ENCODE measurements at regions of chr21 and their contacts with region 1.

Region 1: DNA sequence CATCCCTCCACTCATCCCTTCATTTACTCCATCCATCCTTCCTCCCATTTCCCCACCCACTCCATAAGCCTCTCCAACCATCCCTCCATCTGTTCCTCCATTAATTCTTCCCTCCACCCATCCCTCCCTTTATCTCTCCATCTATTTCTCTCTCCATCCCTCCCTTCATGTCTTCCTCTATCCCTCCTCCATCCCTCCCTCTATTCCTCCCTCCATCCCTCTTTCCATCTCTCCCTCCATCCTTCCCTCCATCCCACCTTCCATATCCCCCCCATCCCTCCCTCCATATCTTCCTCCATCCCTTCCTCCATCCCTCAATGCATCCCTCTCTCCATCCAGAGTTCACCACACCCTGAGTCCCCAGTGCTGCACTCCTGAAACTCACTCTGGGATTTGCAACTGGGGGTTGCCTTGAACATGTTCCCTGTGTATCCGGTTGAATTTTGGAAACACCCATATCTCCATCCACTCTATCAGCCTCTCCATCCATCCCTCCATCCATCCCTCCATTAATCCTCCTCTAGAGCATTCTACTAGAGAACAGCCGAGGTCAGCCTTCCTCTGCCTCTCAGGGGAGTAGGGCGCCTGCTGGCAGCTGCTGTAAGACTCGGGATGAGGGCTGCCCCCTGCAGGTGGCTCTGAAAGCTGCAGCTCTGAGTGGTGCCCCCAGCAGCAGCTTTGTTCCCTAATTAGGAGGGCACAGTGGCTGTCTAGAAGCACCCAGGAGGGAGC is 39.4 kb downstream of the ABCG1 start:
- DNase-seq: peak; percentile 75 to 85 (median 78)
- H3K4me3 ChIP-seq: no peak overlapping the region
- H3K27ac ChIP-seq: no peak overlapping the region
- H3K4me1 ChIP-seq: peaks cover 9 to 68% (median 55%) of the 10 kb centered on the region in 4 experiments
- H3K27me3 ChIP-seq: no peaks in the 10 kb centered on the region

Region 2: DNA sequence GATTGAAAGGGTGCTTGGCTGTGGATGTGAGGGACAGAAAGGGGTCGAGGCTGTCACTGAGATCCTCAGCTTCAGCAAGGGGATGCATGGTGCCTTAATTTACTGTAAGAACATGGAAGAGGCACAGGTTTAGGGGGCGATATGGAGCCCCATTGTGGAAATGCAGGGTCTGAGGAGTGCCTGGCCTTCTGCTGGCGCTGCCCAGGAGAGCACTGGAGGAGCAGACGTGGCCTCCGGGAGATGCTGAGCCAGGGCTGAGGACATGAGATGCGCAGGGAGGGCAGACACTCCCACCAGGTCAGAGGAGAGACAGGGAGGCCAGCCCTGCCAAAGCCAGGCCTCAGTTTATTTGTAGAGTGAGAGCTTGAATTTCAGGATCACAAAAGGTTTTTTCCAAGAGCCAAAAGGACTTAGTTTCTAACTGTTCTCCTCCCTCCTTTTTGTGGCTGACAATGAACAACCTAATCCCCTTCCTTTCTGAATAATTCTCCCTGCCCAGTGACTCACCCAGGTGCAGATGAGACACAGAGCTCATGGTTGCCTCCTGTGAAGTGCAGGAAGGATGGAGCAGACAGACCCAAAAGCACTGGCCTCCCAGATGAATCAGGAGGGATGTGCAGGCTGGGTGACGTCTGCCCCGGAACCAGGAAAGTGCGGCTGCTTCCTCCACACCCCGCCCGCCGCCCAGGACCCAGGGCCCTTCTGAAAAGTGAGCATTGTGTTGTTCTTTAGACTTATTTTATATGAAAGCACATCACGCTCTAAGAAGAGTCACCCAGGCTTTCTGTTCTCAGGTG is 677.4 kb before region 1 on chr21:
- CTCF ChIA-PET with region 1: no interaction called
- POLR2A ChIA-PET with region 1: no interaction called
- DNase-seq: no peak
- H3K4me3 ChIP-seq: no peak overlapping the region
- H3K27ac ChIP-seq: no peak overlapping the region
- H3K4me1 ChIP-seq: no peaks in the 10 kb centered on the region
- H3K27me3 ChIP-seq: no peaks in the 10 kb centered on the region

Region 3: GRCh38 chr21:42156690-42157577 is 101.4 kb before region 1 on chr21:
- CTCF ChIA-PET with region 1: interaction called, 11 read pairs
- POLR2A ChIA-PET with region 1: interaction called, 3 read pairs
- DNase-seq: no peak
- H3K4me3 ChIP-seq: no peak overlapping the region
- H3K27ac ChIP-seq: no peak overlapping the region
- H3K4me1 ChIP-seq: peaks cover 0 to 40% (median 22%) of the 10 kb centered on the region in 4 experiments
- H3K27me3 ChIP-seq: no peaks in the 10 kb centered on the region

Region 4: GRCh38 chr21:42199488-42200458 is 58.5 kb before region 1 on chr21:
- CTCF ChIA-PET with region 1: interaction called, 21 read pairs
- POLR2A ChIA-PET with region 1: no interaction called
- DNase-seq: peak; percentile 57 to 92 (median 85)
- H3K4me3 ChIP-seq: peak overlapping the region in 1 of 7 experiments; percentile 11
- H3K27ac ChIP-seq: no peak overlapping the region
- H3K4me1 ChIP-seq: peaks cover 16 to 32% (median 23%) of the 10 kb centered on the region in 4 experiments
- H3K27me3 ChIP-seq: no peaks in the 10 kb centered on the region

Region 5: GRCh38 chr21:42212266-42212665 is 46.1 kb before region 1 on chr21:
- CTCF ChIA-PET with region 1: no interaction called
- POLR2A ChIA-PET with region 1: no interaction called
- DNase-seq: no peak
- H3K4me3 ChIP-seq: no peak overlapping the region
- H3K27ac ChIP-seq: no peak overlapping the region
- H3K4me1 ChIP-seq: no peaks in the 10 kb centered on the region
- H3K27me3 ChIP-seq: no peaks in the 10 kb centered on the region

Region 6: GRCh38 chr21:42227909-42228708 is 30.2 kb before region 1 on chr21:
- CTCF ChIA-PET with region 1: interaction called, 116 read pairs
- POLR2A ChIA-PET with region 1: interaction called, 3 read pairs
- DNase-seq: peak; percentile 91 to 99 (median 98)
- H3K4me3 ChIP-seq: peak overlapping the region in 5 of 7 experiments; percentile 13 to 63 (median 32)
- H3K27ac ChIP-seq: no peak overlapping the region
- H3K4me1 ChIP-seq: peaks cover 25 to 68% (median 56%) of the 10 kb centered on the region in 4 experiments
- H3K27me3 ChIP-seq: no peaks in the 10 kb centered on the region

Region 7: GRCh38 chr21:42238185-42238934 is 20.0 kb before region 1 on chr21:
- CTCF ChIA-PET with region 1: interaction called, 116 read pairs
- POLR2A ChIA-PET with region 1: interaction called, 8 read pairs
- DNase-seq: peak in 2 of 3 donors; percentile 62 to 74
- H3K4me3 ChIP-seq: no peak overlapping the region
- H3K27ac ChIP-seq: no peak overlapping the region
- H3K4me1 ChIP-seq: peaks cover 23 to 62% (median 53%) of the 10 kb centered on the region in 4 experiments
- H3K27me3 ChIP-seq: no peaks in the 10 kb centered on the region